ENCODE measurements at regions of chr1 and their contacts with region 1.

Region 1: GRCh38 chr1:160342953-160343869 is at the starts of genes COPA and NCSTN:
- DNase-seq: peak; percentile 71 to 97
- H3K4me3 ChIP-seq: peak within 1 kb of the TSS; percentile 56 to 87
- H3K27ac ChIP-seq: peak within 1 kb of the TSS; percentile 89 to 92
- H3K4me1 ChIP-seq: peaks cover 0 to 20% of the 10 kb centered on the region in 2 donors
- H3K27me3 ChIP-seq: no peaks in the 10 kb centered on the region
- CTCF ChIP-seq: no peak
- total RNA-seq, gene COPA: 56.3 TPM
- total RNA-seq, gene NCSTN: 141 TPM

Region 2: DNA sequence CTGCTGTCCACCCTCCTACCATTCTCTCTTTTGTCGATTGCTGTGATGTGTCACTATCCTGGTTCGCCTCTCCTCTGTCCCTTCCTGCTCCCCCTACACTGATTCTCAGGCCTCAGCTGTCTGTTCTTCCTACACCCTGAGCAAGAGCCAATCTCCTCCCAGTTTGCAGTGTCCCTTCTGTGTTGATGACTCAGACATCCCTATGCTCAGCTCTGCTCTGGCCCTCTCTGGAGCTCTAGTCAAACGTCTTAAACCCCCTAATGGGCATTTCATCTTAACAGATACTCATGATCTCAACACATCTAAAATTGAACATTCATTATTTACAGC is 215.1 kb before region 1 on chr1:
- intact Hi-C with region 1: no loop called
- DNase-seq: no peak
- H3K4me3 ChIP-seq: no peak overlapping the region
- H3K27ac ChIP-seq: peak overlapping the region; percentile 58 to 86
- H3K4me1 ChIP-seq: peaks cover 10 to 36% of the 10 kb centered on the region in 2 donors
- H3K27me3 ChIP-seq: no peaks in the 10 kb centered on the region
- CTCF ChIP-seq: no peak

Region 3: GRCh38 chr1:160291248-160292220 is 51.7 kb before region 1 on chr1:
- intact Hi-C with region 1: loop called (anchors 5 kb)
- DNase-seq: peak in 1 of 2 donors; percentile 72
- H3K4me3 ChIP-seq: no peak overlapping the region
- H3K27ac ChIP-seq: no peak overlapping the region
- H3K4me1 ChIP-seq: no peaks in the 10 kb centered on the region
- H3K27me3 ChIP-seq: no peaks in the 10 kb centered on the region
- CTCF ChIP-seq: peak; percentile 69 to 81 (median 74)

Region 4: GRCh38 chr1:160309571-160309970 is 33.6 kb before region 1 on chr1:
- intact Hi-C with region 1: no loop called
- DNase-seq: no peak
- H3K4me3 ChIP-seq: no peak overlapping the region
- H3K27ac ChIP-seq: no peak overlapping the region
- H3K4me1 ChIP-seq: no peaks in the 10 kb centered on the region
- H3K27me3 ChIP-seq: no peaks in the 10 kb centered on the region
- CTCF ChIP-seq: no peak

Region 5: DNA sequence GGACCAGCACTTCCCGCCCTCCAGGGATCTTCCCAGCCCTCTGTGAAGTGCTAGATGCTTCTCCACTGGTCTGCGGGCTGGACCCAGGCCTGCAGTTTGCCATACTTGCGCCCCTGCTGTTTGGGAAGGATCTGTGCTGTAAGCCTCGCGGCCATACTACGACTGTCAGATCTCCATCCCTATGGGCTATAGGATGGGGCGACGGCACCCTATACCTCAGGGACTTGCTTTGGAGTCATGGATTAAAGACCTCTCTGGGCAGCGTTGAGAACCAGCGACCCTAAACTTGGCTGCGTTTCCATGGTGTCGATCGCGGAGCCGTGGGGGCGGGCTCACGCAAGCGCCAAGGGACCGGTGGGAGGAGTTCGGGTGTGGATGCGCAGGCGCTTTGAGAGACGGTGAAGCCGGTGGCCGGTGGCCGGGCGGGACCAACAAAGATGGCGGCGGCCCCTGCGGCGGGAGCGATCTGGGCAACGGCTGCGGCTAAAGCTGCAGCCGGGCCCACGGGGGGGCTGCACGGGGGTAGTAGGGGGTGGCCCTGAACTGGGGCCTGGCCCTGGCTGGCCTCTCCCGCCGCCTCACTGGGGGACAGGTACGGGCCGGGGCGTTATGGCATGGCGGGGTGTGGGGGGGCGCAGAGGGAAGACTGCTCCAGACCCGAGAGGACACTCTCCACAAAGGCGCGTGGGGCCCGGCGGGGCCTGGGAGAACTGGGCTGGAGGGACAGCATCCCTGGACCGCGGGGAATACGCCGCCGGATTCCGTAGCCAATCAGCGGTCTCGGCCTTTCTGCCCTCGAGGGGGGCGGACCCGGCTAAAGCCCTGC is 816.1 kb after region 1 on chr1 and contains the start of gene USP21:
- intact Hi-C with region 1: loop called (anchors 10 kb)
- DNase-seq: peak; percentile 61 to 96
- H3K4me3 ChIP-seq: peak within 1 kb of the TSS; percentile 86 to 92
- H3K27ac ChIP-seq: peak within 1 kb of the TSS; percentile 81 to 83
- H3K4me1 ChIP-seq: peaks cover 0 to 31% of the 10 kb centered on the region in 2 donors
- H3K27me3 ChIP-seq: no peaks in the 10 kb centered on the region
- CTCF ChIP-seq: peak; percentile 9 to 47 (median 37)
- total RNA-seq, gene USP21: 31.9 TPM

Region 6: GRCh38 chr1:161749509-161750407 is 1406.5 kb after region 1 on chr1 and contains the start of gene DUSP12:
- intact Hi-C with region 1: loop called (anchors 5 kb)
- DNase-seq: peak; percentile 69 to 97
- H3K4me3 ChIP-seq: peak within 1 kb of the TSS; percentile 78 to 90
- H3K27ac ChIP-seq: peak within 1 kb of the TSS; percentile 80 to 85
- H3K4me1 ChIP-seq: peaks cover 4 to 10% of the 10 kb centered on the region in 2 donors
- H3K27me3 ChIP-seq: no peaks in the 10 kb centered on the region
- CTCF ChIP-seq: peak in 2 of 3 experiments; percentile 7 to 31
- total RNA-seq, gene DUSP12: 21.0 TPM

Measured in ascending aorta (tissue), 2 donors.